ENCODE measurements at regions of chr12 and their contacts with region 1.

Region 1: GRCh38 chr12:123232807-123233543 is at the starts of genes MPHOSPH9 and MTRFR:
- DNase-seq: peak; percentile 99
- H3K4me3 Mint-ChIP-seq: peak within 1 kb of the TSS; percentile 94
- H3K27ac Mint-ChIP-seq: peak within 1 kb of the TSS; percentile 97
- H3K4me1 Mint-ChIP-seq: peaks cover 76% of the 10 kb centered on the region
- H3K27me3 Mint-ChIP-seq: no peaks in the 10 kb centered on the region
- total RNA-seq, gene MPHOSPH9: 113 to 116 TPM
- total RNA-seq, gene MTRFR: 29.9 to 30.0 TPM

Region 2: DNA sequence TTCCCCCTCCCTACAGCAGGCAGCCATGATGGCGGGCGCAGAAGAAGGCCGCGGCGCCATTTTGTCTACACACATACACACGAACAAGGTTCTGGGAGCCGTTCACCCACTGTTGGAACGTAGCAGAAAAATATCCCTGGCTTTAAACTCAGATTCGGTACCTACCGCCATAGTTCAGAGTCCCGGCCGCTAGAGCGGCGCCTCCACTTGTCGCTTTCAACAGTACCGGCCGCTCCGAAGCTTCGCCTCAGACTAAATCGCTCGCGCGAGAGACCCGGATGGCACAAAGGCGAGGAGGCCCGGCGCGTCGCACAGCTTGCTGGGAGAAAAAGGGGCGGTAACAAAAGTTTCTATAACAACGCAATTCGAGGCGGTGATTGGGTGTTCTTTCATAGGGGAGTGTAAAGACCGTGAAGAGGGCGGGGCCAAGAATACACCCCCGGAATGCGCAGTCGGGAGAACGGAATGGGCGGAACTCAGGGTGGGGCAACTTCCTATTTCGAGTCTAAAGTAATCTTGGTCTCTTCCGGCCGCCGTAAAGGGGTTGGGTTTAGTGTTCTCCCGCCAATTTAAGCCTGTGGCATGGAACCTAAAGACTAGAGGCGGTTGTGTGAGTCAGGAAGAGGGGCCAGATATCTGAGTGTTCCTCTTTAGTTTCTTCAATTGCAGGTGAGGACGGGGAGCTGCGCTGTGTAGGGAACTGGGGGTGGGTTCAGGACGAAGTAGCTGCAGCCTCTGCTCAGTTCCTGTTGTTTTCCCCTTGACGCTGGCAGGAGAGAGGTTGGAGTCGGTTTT is 706.1 kb before region 1 on chr12 and contains the starts of genes KNTC1 and RSRC2:
- CTCF ChIA-PET with region 1: no interaction called
- POLR2A ChIA-PET with region 1: interaction called, 17 read pairs
- DNase-seq: peak; percentile 99
- H3K4me3 Mint-ChIP-seq: no peak within 1 kb of the TSS
- H3K27ac Mint-ChIP-seq: no peak within 1 kb of the TSS
- H3K4me1 Mint-ChIP-seq: peaks cover 44% of the 10 kb centered on the region
- H3K27me3 Mint-ChIP-seq: no peaks in the 10 kb centered on the region
- total RNA-seq, gene KNTC1: 101 to 103 TPM
- total RNA-seq, gene RSRC2: 90.7 to 97.4 TPM

Region 3: GRCh38 chr12:122974274-122974891 is 258.6 kb before region 1 on chr12:
- CTCF ChIA-PET with region 1: interaction called, 12 read pairs
- POLR2A ChIA-PET with region 1: interaction called, 46 read pairs
- DNase-seq: peak; percentile 99
- H3K4me3 Mint-ChIP-seq: peak overlapping the region; percentile 97
- H3K27ac Mint-ChIP-seq: peak overlapping the region; percentile 98
- H3K4me1 Mint-ChIP-seq: peaks cover 34% of the 10 kb centered on the region
- H3K27me3 Mint-ChIP-seq: no peaks in the 10 kb centered on the region

Region 4: GRCh38 chr12:123006977-123007376 is 226.0 kb before region 1 on chr12:
- CTCF ChIA-PET with region 1: no interaction called
- POLR2A ChIA-PET with region 1: no interaction called
- DNase-seq: no peak
- H3K4me3 Mint-ChIP-seq: no peak overlapping the region
- H3K27ac Mint-ChIP-seq: no peak overlapping the region
- H3K4me1 Mint-ChIP-seq: no peaks in the 10 kb centered on the region
- H3K27me3 Mint-ChIP-seq: no peaks in the 10 kb centered on the region

Region 5: GRCh38 chr12:123106628-123107359 is 126.2 kb before region 1 on chr12:
- CTCF ChIA-PET with region 1: interaction called, 3 read pairs
- POLR2A ChIA-PET with region 1: interaction called, 20 read pairs
- DNase-seq: peak; percentile 85
- H3K4me3 Mint-ChIP-seq: peak overlapping the region; percentile 37
- H3K27ac Mint-ChIP-seq: peak overlapping the region; percentile 93
- H3K4me1 Mint-ChIP-seq: peaks cover 39% of the 10 kb centered on the region
- H3K27me3 Mint-ChIP-seq: no peaks in the 10 kb centered on the region

Region 6: GRCh38 chr12:123141615-123142517 is 91.1 kb before region 1 on chr12:
- CTCF ChIA-PET with region 1: no interaction called
- POLR2A ChIA-PET with region 1: no interaction called
- DNase-seq: no peak
- H3K4me3 Mint-ChIP-seq: no peak overlapping the region
- H3K27ac Mint-ChIP-seq: no peak overlapping the region
- H3K4me1 Mint-ChIP-seq: peaks cover 4% of the 10 kb centered on the region
- H3K27me3 Mint-ChIP-seq: no peaks in the 10 kb centered on the region

Region 7: DNA sequence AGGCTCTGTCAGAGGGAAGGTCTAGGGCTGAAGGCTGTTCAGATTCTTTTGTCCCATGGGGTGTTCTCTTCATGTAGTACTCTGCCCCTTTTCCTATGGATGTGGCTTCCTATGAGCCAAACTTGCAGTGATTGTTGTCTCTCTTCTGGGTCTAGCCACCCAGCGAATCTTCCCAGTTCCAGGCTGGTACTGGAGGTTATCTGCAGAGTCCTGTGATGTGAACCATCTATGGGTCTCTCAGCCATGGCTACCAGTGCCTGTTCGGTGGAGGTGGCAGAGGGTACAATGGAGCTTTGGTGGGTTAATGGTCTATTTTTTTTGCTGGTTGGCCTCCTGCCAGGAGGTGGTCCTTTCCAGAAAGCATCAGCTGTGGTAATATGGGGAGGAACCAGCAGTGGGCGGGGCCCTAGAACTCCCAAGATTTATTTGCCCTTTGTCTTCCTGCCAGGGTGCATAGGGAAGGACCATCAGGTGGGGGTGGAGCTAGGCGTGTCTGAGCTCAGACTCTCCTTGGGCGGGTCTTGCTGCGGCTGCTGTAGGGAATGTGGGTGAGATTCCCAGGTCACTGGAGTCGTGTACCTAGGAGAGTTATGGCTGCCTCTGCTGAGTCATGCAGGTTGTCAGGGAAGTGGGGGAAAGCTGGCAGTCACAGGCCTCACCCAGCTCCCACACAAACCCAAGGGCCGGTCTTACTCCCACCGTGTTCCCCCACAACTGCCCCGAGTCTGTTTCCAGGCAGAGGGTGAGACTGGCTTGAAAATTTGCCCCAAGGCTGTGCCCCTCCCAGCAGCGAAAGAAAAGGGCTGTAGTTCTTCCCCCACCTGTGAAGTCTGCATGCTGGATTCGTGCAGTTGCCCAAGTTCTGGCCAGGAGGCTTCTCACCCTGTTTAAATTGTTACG is 17.8 kb after region 1 on chr12:
- CTCF ChIA-PET with region 1: interaction called, 29 read pairs
- POLR2A ChIA-PET with region 1: interaction called, 16 read pairs
- DNase-seq: no peak
- H3K4me3 Mint-ChIP-seq: no peak overlapping the region
- H3K27ac Mint-ChIP-seq: no peak overlapping the region
- H3K4me1 Mint-ChIP-seq: peaks cover 19% of the 10 kb centered on the region
- H3K27me3 Mint-ChIP-seq: no peaks in the 10 kb centered on the region

Region 8: GRCh38 chr12:123601602-123602489 is 368.9 kb after region 1 on chr12 and contains the start of gene DDX55:
- CTCF ChIA-PET with region 1: interaction called, 5 read pairs
- POLR2A ChIA-PET with region 1: interaction called, 18 read pairs
- DNase-seq: peak; percentile 88
- H3K4me3 Mint-ChIP-seq: peak within 1 kb of the TSS; percentile 86
- H3K27ac Mint-ChIP-seq: peak within 1 kb of the TSS; percentile 87
- H3K4me1 Mint-ChIP-seq: peaks cover 47% of the 10 kb centered on the region
- H3K27me3 Mint-ChIP-seq: no peaks in the 10 kb centered on the region
- total RNA-seq, gene DDX55: 26.8 to 26.9 TPM